MCF 10A (cell line): ENCODE measurements at regions of chr17 and their contacts with region 1.

Region 1: GRCh38 chr17:77429919-77430752 is 289.4 kb downstream of the SEC14L1 start:
- DNase-seq: peak; percentile 83
- H3K4me3 Mint-ChIP-seq: no peak overlapping the region
- H3K27ac Mint-ChIP-seq: no peak overlapping the region
- H3K4me1 Mint-ChIP-seq: peaks cover 26% of the 10 kb centered on the region
- H3K27me3 Mint-ChIP-seq: no peaks in the 10 kb centered on the region
- CTCF ChIP-seq: peak; percentile 75

Region 2: GRCh38 chr17:77331301-77331864 is 98.8 kb before region 1 on chr17:
- CTCF ChIA-PET with region 1: interaction called, 12 read pairs
- POLR2A ChIA-PET with region 1: interaction called, 14 read pairs
- intact Hi-C with region 1: loop called (anchors 1 kb)
- DNase-seq: peak; percentile 89
- H3K4me3 Mint-ChIP-seq: peak overlapping the region; percentile 48
- H3K27ac Mint-ChIP-seq: peak overlapping the region; percentile 46
- H3K4me1 Mint-ChIP-seq: peaks cover 33% of the 10 kb centered on the region
- H3K27me3 Mint-ChIP-seq: no peaks in the 10 kb centered on the region
- CTCF ChIP-seq: peak; percentile 97

Region 3: DNA sequence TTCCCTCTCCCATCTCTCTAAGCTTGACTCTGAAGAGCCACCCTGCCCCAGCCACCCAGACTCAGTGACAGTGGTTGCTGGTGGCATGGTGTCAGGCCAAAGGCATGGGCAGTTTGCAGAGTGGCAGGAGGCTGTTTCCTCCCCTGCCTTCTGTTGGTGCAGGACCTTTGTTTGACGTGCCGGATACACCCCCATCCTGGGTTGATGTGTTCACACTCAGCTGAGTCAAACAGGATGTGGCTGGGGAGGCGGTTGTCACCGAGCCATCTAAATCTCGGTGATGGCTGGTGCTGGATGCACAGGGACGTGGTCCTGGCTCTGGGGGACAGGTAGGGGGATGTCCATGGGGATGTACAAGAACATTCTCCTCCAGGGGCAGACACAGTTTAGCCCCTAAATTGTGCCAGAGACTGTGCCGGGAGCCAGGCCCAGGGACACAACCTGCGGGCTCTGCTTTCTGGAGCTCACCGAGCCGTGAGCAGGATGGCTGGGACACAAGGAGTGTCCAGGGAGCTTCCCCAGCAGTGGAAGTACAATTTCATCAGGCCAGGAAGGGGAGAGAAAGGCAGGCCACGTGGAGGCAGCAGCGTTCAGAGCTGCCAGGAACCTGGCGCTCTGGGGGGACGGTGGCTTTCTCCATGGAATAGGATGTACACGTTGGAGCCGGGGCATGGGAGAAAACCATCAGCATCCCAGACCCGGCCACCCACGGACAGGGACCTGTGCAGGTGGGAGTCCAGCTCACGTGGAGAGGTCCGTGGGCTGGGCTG is 25.1 kb before region 1 on chr17:
- CTCF ChIA-PET with region 1: interaction called, 15 read pairs
- POLR2A ChIA-PET with region 1: interaction called, 112 read pairs
- intact Hi-C with region 1: no loop called
- DNase-seq: peak; percentile 66
- H3K4me3 Mint-ChIP-seq: no peak overlapping the region
- H3K27ac Mint-ChIP-seq: peak overlapping the region; percentile 61
- H3K4me1 Mint-ChIP-seq: peaks cover 56% of the 10 kb centered on the region
- H3K27me3 Mint-ChIP-seq: no peaks in the 10 kb centered on the region
- CTCF ChIP-seq: no peak

Region 4: GRCh38 chr17:77451245-77451893 is 21.2 kb after region 1 on chr17:
- CTCF ChIA-PET with region 1: interaction called, 45 read pairs
- POLR2A ChIA-PET with region 1: interaction called, 81 read pairs
- intact Hi-C with region 1: no loop called
- DNase-seq: no peak
- H3K4me3 Mint-ChIP-seq: peak overlapping the region; percentile 64
- H3K27ac Mint-ChIP-seq: peak overlapping the region; percentile 75
- H3K4me1 Mint-ChIP-seq: peaks cover 55% of the 10 kb centered on the region
- H3K27me3 Mint-ChIP-seq: no peaks in the 10 kb centered on the region
- CTCF ChIP-seq: no peak

Region 5: DNA sequence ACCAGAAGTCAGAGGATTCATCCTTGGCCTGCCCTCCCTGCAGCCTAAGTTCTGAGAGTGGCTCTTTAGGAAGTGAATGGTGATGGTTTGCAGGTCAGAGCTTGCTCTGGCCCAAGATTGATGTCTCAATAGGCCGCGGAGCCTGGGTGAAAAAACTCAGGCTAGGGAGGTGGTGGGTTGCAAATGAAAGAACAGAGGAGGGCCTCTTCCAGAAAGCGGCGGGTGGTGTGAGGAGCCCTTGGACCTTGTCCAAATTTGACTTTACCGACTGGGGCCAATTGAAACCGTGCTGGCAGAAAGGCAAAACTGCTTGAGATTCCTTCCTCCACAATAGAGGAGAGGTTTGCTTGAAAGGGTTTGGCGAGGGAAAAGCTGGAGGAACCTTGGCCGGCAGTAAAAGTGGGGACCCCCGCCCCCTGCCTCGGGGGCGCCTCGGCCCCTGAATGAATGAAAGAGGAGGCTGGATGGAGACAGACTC is 41.9 kb after region 1 on chr17:
- CTCF ChIA-PET with region 1: interaction called, 7 read pairs
- POLR2A ChIA-PET with region 1: interaction called, 33 read pairs
- intact Hi-C with region 1: loop called (anchors 1 kb)
- DNase-seq: peak; percentile 92
- H3K4me3 Mint-ChIP-seq: peak overlapping the region; percentile 30
- H3K27ac Mint-ChIP-seq: peak overlapping the region; percentile 76
- H3K4me1 Mint-ChIP-seq: peaks cover 71% of the 10 kb centered on the region
- H3K27me3 Mint-ChIP-seq: no peaks in the 10 kb centered on the region
- CTCF ChIP-seq: no peak

Region 6: DNA sequence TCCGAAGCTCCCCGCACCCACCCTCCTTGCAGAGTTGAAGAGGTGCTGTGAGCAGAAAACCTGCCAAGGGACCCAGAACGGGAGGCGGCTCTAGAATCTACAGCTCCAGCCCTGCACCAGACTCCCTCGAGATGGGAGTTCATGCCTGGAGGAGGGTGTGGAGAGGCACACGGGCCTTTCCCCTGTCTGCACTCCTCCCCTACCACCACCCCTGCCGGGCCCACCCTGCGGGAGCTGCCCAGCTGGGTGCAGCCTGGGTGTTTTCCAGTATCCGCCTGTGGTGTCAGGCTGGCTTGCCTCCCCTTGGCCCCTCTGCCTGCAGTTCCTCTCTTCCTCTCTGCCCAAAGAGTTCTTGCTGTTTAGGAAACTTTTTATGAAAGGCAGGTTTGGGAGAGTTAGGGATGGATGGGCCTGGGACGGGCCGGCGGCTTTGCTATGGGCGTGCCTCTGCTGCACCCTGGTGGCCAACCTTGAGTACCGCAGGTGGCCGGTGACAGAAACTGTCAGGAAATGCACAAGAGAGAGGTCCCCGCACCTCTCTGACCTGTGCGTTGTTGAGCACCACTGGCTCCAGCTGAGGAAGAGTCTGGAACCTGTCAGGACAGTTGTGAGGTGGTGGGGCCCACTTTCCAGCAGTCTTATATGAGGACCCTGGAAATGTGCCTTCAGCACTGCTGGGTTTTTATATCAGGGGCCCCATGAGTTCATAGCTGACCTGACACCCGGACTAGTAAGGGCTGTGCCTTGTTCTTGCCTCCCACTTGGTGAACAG is 64.7 kb after region 1 on chr17:
- CTCF ChIA-PET with region 1: interaction called, 50 read pairs
- POLR2A ChIA-PET with region 1: no interaction called
- intact Hi-C with region 1: loop called (anchors 1 kb)
- DNase-seq: peak; percentile 71
- H3K4me3 Mint-ChIP-seq: no peak overlapping the region
- H3K27ac Mint-ChIP-seq: peak overlapping the region; percentile 8
- H3K4me1 Mint-ChIP-seq: no peaks in the 10 kb centered on the region
- H3K27me3 Mint-ChIP-seq: no peaks in the 10 kb centered on the region
- CTCF ChIP-seq: peak; percentile 94